ENCODE measurements at regions of chr16 and their contacts with region 1.

Region 1: GRCh38 chr16:57757326-57757786 is 21.8 kb downstream of the KATNB1 start:
- DNase-seq: no peak
- H3K4me3 ChIP-seq: no peak overlapping the region
- H3K27ac ChIP-seq: peak overlapping the region in 2 of 4 donors; percentile 10 to 25
- H3K4me1 ChIP-seq: peaks cover 11 to 27% (median 12%) of the 10 kb centered on the region in 3 donors
- H3K27me3 ChIP-seq: no peaks in the 10 kb centered on the region
- CTCF ChIP-seq: peak; percentile 93 to 98 (median 95)
- POLR2A ChIP-seq: no peak

Region 2: DNA sequence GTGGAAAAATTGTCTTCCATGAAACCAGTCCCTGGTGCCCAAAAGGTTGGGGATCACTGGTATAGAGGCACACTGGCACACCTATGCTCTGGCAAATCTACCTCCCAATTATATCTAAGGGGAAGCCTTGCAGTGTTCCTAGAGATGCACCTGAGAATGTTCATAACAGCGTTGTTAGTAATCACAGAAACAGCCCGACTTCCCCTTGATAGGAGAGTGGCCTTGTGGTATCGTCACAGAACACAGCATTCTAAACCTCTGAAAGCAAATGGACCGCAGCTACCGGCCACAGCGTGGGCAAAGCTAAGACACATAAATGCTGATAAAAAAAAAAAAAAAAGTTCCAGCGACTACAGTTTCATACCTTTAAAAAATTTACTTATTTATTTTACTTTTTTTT is 168.0 kb before region 1 on chr16:
- intact Hi-C with region 1: loop called (anchors 10 kb)
- DNase-seq: no peak
- H3K4me3 ChIP-seq: no peak overlapping the region
- H3K27ac ChIP-seq: no peak overlapping the region
- H3K4me1 ChIP-seq: peaks cover 9 to 31% (median 10%) of the 10 kb centered on the region in 3 donors
- H3K27me3 ChIP-seq: peaks cover 0 to 24% (median 0%) of the 10 kb centered on the region in 4 donors
- CTCF ChIP-seq: no peak
- POLR2A ChIP-seq: no peak

Region 3: DNA sequence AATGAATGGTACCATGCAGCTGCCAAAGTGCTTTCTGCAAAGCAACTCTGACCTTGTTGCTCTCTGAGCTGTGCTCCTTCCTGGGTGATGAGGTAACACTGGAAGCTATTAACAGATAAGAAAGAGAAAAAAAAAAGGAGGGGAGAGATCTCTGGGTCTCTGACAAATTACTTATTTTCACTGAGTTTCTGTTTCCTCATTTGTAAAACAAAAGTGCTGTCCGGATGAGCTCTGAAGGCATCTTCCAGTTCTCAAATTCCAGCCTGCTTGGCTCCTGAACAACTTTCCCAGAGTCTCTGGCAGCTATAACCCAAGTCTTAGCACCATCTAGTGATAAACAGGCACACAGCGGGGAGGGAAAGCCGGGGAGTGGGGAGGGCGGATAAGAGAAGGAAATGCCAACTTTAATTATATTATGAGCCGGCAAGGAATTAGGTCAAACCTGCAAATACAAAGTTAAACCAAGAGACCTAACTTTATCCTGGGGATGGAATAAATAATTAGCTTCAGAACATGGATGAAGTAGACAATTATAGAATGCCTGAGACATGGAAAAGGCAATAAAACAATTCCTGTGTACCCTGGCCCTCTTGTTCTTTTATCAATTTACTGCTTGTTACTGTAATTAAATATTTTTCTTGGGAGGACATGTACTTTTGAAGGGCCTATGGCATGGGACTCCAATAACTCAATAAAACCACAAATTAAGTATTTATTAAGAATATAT is 106.2 kb after region 1 on chr16:
- intact Hi-C with region 1: loop called (anchors 5 kb)
- DNase-seq: no peak
- H3K4me3 ChIP-seq: no peak overlapping the region
- H3K27ac ChIP-seq: no peak overlapping the region
- H3K4me1 ChIP-seq: peaks cover 0 to 27% (median 13%) of the 10 kb centered on the region in 3 donors
- H3K27me3 ChIP-seq: no peaks in the 10 kb centered on the region
- CTCF ChIP-seq: peak in 4 of 6 experiments; percentile 48 to 61 (median 50)
- POLR2A ChIP-seq: no peak

Region 4: GRCh38 chr16:58000706-58001676 is 243.6 kb after region 1 on chr16 and contains the start of gene USB1:
- intact Hi-C with region 1: loop called (anchors 5 kb)
- DNase-seq: no peak
- H3K4me3 ChIP-seq: peak within 1 kb of the TSS; percentile 65 to 91 (median 78)
- H3K27ac ChIP-seq: peak within 1 kb of the TSS; percentile 90 to 96 (median 93)
- H3K4me1 ChIP-seq: peaks cover 13 to 48% (median 33%) of the 10 kb centered on the region in 3 donors
- H3K27me3 ChIP-seq: no peaks in the 10 kb centered on the region
- CTCF ChIP-seq: peak; percentile 57 to 84 (median 72)
- POLR2A ChIP-seq: peak in 1 of 4 donors; percentile 72
- total RNA-seq, gene USB1: 11.2 to 23.9 (median 18.6) TPM

Measured in esophagus squamous epithelium (tissue), 5 donors.